Lower leg skin (tissue), 4 donors: ENCODE measurements at regions of chr10 and their contacts with region 1.

Region 1: GRCh38 chr10:49606981-49607535 is 3.1 kb upstream of the SLC18A3 start:
- DNase-seq: peak; percentile 35 to 82
- H3K4me3 ChIP-seq: no peak overlapping the region
- CTCF ChIP-seq: no peak
- POLR2A ChIP-seq: no peak

Region 2: GRCh38 chr10:48736596-48736995 is 870.5 kb before region 1 on chr10:
- intact Hi-C with region 1: loop called (anchors 10 kb)
- DNase-seq: no peak
- H3K4me3 ChIP-seq: no peak overlapping the region
- CTCF ChIP-seq: no peak
- POLR2A ChIP-seq: no peak

Region 3: DNA sequence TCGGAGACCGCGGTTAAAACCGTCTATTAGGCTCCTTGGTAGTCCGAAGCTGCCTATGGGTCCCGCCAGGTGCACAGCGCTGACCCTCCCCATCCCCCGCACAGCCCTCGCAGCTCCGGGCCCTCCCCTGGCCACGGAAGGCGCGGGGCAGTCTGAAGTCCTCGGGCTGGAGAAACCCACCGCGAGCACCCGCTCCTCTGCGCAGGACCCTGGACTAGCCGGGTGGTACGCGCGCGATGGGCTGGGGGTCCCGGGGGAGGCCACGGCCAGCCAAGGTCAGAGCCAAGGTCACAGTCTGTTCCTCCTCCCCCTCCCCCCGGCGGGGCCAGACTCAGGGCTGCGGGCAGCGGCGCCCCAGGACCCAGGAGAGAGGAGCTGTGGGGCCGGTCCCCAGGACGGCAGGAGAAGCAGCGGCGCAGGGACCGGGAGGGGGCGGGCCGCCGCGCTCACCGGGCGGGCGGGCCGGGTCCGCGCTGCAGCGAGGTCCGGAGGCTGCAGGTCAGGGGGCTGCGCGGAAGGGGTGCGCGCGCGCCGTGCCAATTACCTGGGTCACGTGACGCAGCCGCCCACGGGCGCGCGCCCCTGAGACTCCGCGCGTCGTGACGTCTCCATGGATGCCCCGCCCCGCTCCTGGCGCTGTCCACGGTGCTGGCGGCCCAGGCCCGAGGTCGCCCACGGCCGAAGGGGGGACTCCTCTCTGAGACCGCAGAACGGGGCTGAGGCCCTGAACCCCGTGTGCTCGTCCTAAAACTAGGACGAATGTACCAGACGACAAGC is 154.9 kb after region 1 on chr10 and contains the start of gene OGDHL:
- intact Hi-C with region 1: no loop called
- DNase-seq: peak in 1 of 2 donors; percentile 80
- H3K4me3 ChIP-seq: no peak within 1 kb of the TSS
- CTCF ChIP-seq: no peak
- POLR2A ChIP-seq: no peak
- total RNA-seq, gene OGDHL: 0.10 to 0.16 TPM in 2 of 4 donors, not detected in the others